ENCODE measurements at regions of chr6 and their contacts with region 1.

Region 1: DNA sequence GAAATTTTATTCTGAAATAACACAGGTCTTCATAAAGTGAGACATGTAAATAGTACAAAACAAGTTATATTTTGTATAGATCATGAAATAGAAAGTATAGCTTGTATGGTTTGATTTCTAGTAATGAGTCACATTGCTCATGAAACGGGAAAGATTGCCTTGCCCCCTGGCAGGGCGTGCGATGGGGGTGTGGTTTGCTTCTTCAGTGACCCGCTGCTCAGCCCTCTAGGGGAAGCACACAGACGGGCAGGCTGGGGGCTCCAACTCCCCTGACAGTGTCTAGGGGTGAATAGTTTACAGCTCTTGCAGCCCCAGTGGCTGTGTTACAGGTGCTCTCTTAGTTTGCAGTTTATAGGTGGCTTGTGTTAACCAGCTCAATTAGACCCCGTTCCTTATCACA is 170.5 kb upstream of the RGS17 start:
- DNase-seq: no peak
- H3K4me3 ChIP-seq: no peak overlapping the region
- H3K27ac ChIP-seq: no peak overlapping the region
- H3K4me1 ChIP-seq: no peaks in the 10 kb centered on the region; a peak in 1 of 4 replicates
- H3K27me3 ChIP-seq: no peaks in the 10 kb centered on the region
- CTCF ChIP-seq: no peak
- EP300 ChIP-seq: no peak
- RAD21 ChIP-seq: no peak

Region 2: DNA sequence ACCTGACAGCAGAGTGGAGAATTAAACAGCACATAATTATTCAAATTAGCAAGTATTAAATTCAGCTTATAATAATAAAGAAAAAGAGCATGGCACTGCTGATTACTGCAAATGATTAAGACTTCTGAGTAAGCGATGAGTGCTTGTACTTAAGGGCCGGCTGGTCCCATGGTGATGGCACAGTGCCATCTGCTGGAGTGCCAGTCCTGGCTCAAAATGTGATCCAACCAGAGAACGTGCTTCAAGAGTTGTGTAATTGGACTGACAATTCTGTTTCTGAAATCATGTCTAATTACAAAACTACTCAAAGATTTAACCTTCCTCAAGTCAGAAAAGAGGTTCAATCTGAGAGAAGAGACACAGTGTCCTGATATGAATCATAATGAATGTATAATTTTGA is 11.0 kb after region 1 on chr6:
- CTCF ChIA-PET with region 1: interaction called, 13 read pairs
- POLR2A ChIA-PET with region 1: no interaction called
- DNase-seq: peak; percentile 75
- H3K4me3 ChIP-seq: no peak overlapping the region
- H3K27ac ChIP-seq: peak overlapping the region in 1 of 2 experiments; percentile 22; a peak in 1 of 4 replicates
- H3K4me1 ChIP-seq: peaks cover 0 to 8% of the 10 kb centered on the region in 2 experiments; a peak in 3 of 4 replicates
- H3K27me3 ChIP-seq: no peaks in the 10 kb centered on the region
- CTCF ChIP-seq: peak; percentile 57
- EP300 ChIP-seq: no peak
- RAD21 ChIP-seq: peak; percentile 88